Naive thymus-derived CD8-positive, alpha-beta T cell (primary cell): ENCODE measurements at regions of chr20 and their contacts with region 1.

Region 1: GRCh38 chr20:59032023-59032712 is at the start of gene ATP5F1E:
- DNase-seq: peak; percentile 94 to 99 (median 97)
- ATAC-seq: peak; percentile 95 to 96
- H3K4me3 Mint-ChIP-seq: peak within 1 kb of the TSS; percentile 87 to 97 (median 94)
- H3K27ac Mint-ChIP-seq: peak within 1 kb of the TSS; percentile 88 to 97 (median 96)
- H3K4me1 Mint-ChIP-seq: peaks cover 27 to 53% (median 50%) of the 10 kb centered on the region in 4 donors
- H3K27me3 Mint-ChIP-seq: no peaks in the 10 kb centered on the region
- polyA plus RNA-seq, gene ATP5F1E: 66.9 to 118 (median 91.4) TPM

Region 2: DNA sequence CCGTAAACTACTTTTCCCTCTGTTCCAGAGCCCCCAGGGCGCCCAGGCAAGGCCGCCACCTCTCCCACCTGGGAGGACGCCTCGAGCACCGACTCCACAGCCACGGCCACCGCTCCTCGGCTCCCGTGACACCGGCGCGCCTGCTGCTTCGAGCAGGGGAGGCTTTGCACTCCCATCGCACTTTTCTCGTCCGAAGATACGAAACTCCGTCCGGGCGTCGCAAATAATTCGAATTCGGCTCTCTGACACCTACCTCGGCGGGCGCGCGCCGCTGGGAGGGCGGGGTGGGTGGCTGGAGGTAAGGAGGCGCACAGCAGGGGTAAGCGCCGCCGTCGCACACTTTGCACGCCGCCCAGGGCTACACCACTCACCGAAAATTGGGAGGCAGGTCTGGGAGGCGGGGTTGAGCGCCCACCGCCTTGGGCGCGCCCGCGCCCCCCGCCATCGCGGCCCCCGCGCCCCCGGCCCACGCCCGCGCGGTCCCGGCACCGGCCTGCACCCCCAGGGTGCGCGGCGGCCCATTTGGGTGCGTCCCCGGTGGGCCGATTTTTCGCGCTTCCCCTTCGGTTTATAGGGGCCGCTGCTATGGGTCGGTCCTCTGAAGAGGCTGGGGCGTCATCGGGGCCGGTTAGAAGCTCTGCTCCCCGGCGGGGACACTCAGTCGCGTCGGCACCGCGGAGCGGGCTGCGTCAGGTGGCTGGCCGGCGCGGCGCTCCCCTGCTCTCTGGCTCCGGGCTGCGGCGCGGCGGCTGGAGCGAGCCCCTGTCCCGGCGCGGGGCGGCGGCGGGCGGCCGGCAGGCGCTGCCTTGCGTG is 143.4 kb before region 1 on chr20:
- POLR2A ChIA-PET with region 1: interaction called, 72 read pairs
- DNase-seq: peak; percentile 75 to 93 (median 84)
- ATAC-seq: peak; percentile 47 to 56
- H3K4me3 Mint-ChIP-seq: peak overlapping the region; percentile 78 to 90 (median 84)
- H3K27ac Mint-ChIP-seq: peak overlapping the region in 9 of 10 donors; percentile 83 to 93 (median 90)
- H3K4me1 Mint-ChIP-seq: peaks cover 7 to 38% (median 19%) of the 10 kb centered on the region in 4 donors
- H3K27me3 Mint-ChIP-seq: no peaks in the 10 kb centered on the region

Region 3: GRCh38 chr20:58980700-58981627 is 51.2 kb before region 1 on chr20 and contains the start of gene NELFCD:
- POLR2A ChIA-PET with region 1: interaction called, 40 read pairs
- DNase-seq: peak; percentile 76 to 97 (median 88)
- ATAC-seq: peak; percentile 94
- H3K4me3 Mint-ChIP-seq: peak within 1 kb of the TSS; percentile 54 to 95 (median 92)
- H3K27ac Mint-ChIP-seq: peak within 1 kb of the TSS; percentile 53 to 95 (median 91)
- H3K4me1 Mint-ChIP-seq: peaks cover 22 to 46% (median 34%) of the 10 kb centered on the region in 4 donors
- H3K27me3 Mint-ChIP-seq: peaks cover 0 to 1% (median 0%) of the 10 kb centered on the region in 5 donors
- polyA plus RNA-seq, gene NELFCD: 63.6 to 76.5 (median 74.0) TPM

Region 4: GRCh38 chr20:59006864-59007664 is 25.1 kb before region 1 on chr20 and contains the start of gene CTSZ:
- POLR2A ChIA-PET with region 1: interaction called, 20 read pairs
- DNase-seq: peak in 7 of 10 donors; percentile 12 to 40 (median 33)
- ATAC-seq: peak; percentile 44 to 66
- H3K4me3 Mint-ChIP-seq: peak within 1 kb of the TSS; percentile 66 to 93 (median 85)
- H3K27ac Mint-ChIP-seq: peak within 1 kb of the TSS in 5 of 10 donors; percentile 43 to 93 (median 84)
- H3K4me1 Mint-ChIP-seq: peaks cover 32 to 53% (median 48%) of the 10 kb centered on the region in 4 donors
- H3K27me3 Mint-ChIP-seq: no peaks in the 10 kb centered on the region
- polyA plus RNA-seq, gene CTSZ: 0.60 to 2.9 (median 1.0) TPM

Region 5: DNA sequence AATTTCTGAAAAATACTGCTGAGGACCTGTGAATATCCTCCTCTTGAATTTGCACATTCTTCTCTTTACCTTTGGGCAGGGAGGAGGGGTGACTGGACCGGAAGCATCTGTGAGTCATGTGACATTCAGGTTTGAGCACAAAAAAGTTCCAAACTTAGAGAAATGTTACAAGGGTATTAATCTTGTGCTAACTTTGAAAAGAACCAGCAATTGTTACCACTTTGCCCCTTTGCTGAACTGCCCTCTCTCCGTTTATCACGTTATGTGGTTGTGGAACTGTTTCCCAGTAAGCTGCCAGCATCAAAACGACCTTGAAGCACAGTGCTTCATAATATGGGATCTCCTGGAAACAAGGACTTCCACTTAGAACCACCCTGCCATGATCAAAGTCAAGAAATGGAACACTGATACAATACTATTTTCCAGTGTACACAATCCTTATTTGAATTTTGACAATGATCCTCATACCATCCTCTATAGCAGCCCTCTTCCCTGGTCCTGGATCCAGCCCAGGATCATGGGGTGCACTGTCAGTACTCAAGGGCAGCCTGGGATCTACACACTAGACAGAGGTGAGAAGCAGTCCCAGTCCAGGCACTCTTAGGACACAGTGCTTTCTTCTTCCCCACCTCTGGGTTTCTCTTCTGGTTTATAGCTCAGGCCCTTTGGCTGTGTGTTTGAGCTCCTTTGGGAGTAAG is 15.2 kb before region 1 on chr20:
- POLR2A ChIA-PET with region 1: interaction called, 17 read pairs
- DNase-seq: peak in 2 of 10 donors; percentile 11 to 23
- ATAC-seq: peak; percentile 40 to 44
- H3K4me3 Mint-ChIP-seq: peak overlapping the region in 5 of 10 donors; percentile 1 to 40 (median 14)
- H3K27ac Mint-ChIP-seq: peak overlapping the region in 6 of 10 donors; percentile 34 to 71 (median 56)
- H3K4me1 Mint-ChIP-seq: peaks cover 31 to 46% (median 40%) of the 10 kb centered on the region in 4 donors
- H3K27me3 Mint-ChIP-seq: no peaks in the 10 kb centered on the region

Region 6: GRCh38 chr20:59042796-59043660 is 10.9 kb after region 1 on chr20:
- POLR2A ChIA-PET with region 1: interaction called, 68 read pairs
- DNase-seq: peak; percentile 88 to 96 (median 94)
- ATAC-seq: peak; percentile 96
- H3K4me3 Mint-ChIP-seq: peak overlapping the region; percentile 63 to 94 (median 90)
- H3K27ac Mint-ChIP-seq: peak overlapping the region; percentile 81 to 98 (median 94)
- H3K4me1 Mint-ChIP-seq: peaks cover 22 to 55% (median 49%) of the 10 kb centered on the region in 4 donors
- H3K27me3 Mint-ChIP-seq: peaks cover 0 to 3% (median 0%) of the 10 kb centered on the region in 5 donors

Region 7: DNA sequence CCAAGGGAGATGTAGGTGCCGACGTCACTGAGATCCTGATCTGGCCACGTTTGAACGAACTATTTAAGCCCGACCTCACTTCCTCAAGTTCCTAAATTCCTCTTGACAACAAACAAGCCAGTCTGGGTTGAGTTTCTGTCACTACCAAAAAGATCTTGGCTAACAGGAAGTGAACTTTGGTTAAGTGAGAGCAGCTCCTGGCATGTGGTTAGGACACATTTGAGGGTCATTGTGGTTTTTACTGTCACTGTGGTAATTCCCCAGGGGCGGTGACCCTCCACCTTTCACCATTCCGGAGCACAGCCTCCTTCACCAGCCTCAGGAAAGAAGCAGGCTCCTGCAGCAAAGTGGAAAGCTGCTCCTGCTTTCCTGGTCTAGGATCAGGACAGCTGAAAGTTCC is 88.3 kb after region 1 on chr20:
- POLR2A ChIA-PET with region 1: interaction called, 13 read pairs
- DNase-seq: peak in 7 of 10 donors; percentile 24 to 56 (median 51)
- ATAC-seq: peak in 1 of 2 donors; percentile 16
- H3K4me3 Mint-ChIP-seq: peak overlapping the region in 9 of 10 donors; percentile 31 to 95 (median 88)
- H3K27ac Mint-ChIP-seq: peak overlapping the region; percentile 99 to 100 (median 100)
- H3K4me1 Mint-ChIP-seq: peaks cover 61 to 99% (median 92%) of the 10 kb centered on the region in 4 donors
- H3K27me3 Mint-ChIP-seq: no peaks in the 10 kb centered on the region